ENCODE measurements at regions of chr13 and their contacts with region 1.

Region 1: GRCh38 chr13:40777166-40777808 is 6.3 kb upstream of the MRPS31 start:
- DNase-seq: peak; percentile 65
- ATAC-seq: peak; percentile 88
- H3K4me3 ChIP-seq: peak overlapping the region in 1 of 2 experiments; percentile 40; a peak in 2 of 4 replicates
- H3K27ac ChIP-seq: 0 out of 2 replicates have a peak overlapping the region, but pooled peaks have one; percentile 4
- H3K4me1 ChIP-seq: peaks cover 12 to 32% of the 10 kb centered on the region in 2 experiments
- H3K27me3 ChIP-seq: no peaks in the 10 kb centered on the region
- CTCF ChIP-seq: peak; percentile 58 to 98 (median 81)
- POLR2A ChIP-seq: no peak
- RAD21 ChIP-seq: peak; percentile 81

Region 2: DNA sequence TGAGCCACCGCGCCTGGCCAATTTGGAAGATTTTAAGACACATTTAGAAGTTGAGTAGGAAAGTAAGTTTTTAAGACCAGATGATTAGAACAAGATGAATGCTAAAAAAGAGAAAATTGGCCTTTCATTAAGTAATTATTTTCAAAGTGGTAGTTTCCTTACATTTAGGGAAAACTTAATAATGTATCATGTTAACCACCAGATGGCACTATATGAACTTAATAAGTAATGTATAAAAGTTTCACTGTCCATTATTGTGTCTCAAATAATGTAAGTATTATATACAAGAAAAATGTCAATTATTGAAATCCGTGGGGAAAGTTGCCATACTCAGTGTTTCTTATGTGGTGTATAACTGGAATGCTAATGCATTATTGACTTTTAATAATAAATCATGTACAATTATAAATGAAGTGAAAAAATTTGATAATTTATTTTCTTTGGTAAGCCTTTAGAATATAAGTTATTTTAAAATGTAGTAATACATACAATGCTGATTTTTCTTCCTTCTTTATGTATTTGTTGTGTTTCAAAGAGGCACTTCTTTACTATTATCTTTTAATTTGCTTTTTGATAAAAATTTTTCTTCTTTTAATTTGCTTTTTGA is 1092.7 kb before region 1 on chr13:
- CTCF ChIA-PET with region 1: interaction called, 6 read pairs
- POLR2A ChIA-PET with region 1: no interaction called
- RAD21 ChIA-PET with region 1: no interaction called
- intact Hi-C with region 1: loop called (anchors 5 kb)
- DNase-seq: peak; percentile 15
- ATAC-seq: peak; percentile 67
- H3K4me3 ChIP-seq: no peak overlapping the region
- H3K27ac ChIP-seq: no peak overlapping the region
- H3K4me1 ChIP-seq: no peaks in the 10 kb centered on the region
- H3K27me3 ChIP-seq: no peaks in the 10 kb centered on the region
- CTCF ChIP-seq: peak in 2 of 3 experiments; percentile 18 to 45; a peak in 2 of 6 replicates
- POLR2A ChIP-seq: no peak
- RAD21 ChIP-seq: peak; percentile 39

Region 3: DNA sequence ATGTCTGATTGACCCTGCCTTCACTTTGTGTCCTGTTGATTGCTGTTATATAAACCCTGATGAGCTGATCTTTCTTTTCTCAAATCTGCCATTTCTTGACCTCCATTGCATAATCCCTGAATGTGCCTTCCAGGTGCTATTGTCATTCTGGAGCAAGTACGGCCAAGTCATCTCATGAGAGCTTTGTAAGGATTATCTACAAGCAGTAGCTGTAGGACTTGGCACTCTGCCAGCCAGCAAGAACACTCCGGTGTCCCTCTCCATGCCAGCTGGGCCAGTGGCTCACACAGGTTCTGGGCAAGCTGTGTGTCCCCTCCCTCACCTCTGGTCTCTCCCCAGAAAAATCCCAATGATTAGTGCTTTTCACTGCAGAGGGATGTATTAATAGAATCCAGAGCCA is 458.9 kb before region 1 on chr13:
- CTCF ChIA-PET with region 1: no interaction called
- POLR2A ChIA-PET with region 1: no interaction called
- RAD21 ChIA-PET with region 1: no interaction called
- intact Hi-C with region 1: no loop called
- DNase-seq: no peak
- ATAC-seq: no peak
- H3K4me3 ChIP-seq: no peak overlapping the region
- H3K27ac ChIP-seq: no peak overlapping the region
- H3K4me1 ChIP-seq: peaks cover 0 to 3% of the 10 kb centered on the region in 2 experiments; a peak in 1 of 4 replicates
- H3K27me3 ChIP-seq: no peaks in the 10 kb centered on the region
- CTCF ChIP-seq: no peak
- POLR2A ChIP-seq: no peak
- RAD21 ChIP-seq: no peak

Region 4: GRCh38 chr13:40789275-40790133 is 12.2 kb after region 1 on chr13 and contains the start of gene SLC25A15:
- CTCF ChIA-PET with region 1: interaction called, 11 read pairs
- POLR2A ChIA-PET with region 1: interaction called, 3 read pairs
- RAD21 ChIA-PET with region 1: no interaction called
- intact Hi-C with region 1: no loop called
- DNase-seq: peak; percentile 48
- ATAC-seq: peak; percentile 93
- H3K4me3 ChIP-seq: peak within 1 kb of the TSS; percentile 75 to 81
- H3K27ac ChIP-seq: peak within 1 kb of the TSS; percentile 91
- H3K4me1 ChIP-seq: peaks cover 15 to 36% of the 10 kb centered on the region in 2 experiments; a peak in 3 of 4 replicates
- H3K27me3 ChIP-seq: no peaks in the 10 kb centered on the region
- CTCF ChIP-seq: 0 out of 6 replicates have a peak, but pooled peaks of 1 of the 3 experiments have one; percentile 4
- POLR2A ChIP-seq: peak; percentile 24
- RAD21 ChIP-seq: no peak
- total RNA-seq, gene SLC25A15: 24.5 TPM

Region 5: DNA sequence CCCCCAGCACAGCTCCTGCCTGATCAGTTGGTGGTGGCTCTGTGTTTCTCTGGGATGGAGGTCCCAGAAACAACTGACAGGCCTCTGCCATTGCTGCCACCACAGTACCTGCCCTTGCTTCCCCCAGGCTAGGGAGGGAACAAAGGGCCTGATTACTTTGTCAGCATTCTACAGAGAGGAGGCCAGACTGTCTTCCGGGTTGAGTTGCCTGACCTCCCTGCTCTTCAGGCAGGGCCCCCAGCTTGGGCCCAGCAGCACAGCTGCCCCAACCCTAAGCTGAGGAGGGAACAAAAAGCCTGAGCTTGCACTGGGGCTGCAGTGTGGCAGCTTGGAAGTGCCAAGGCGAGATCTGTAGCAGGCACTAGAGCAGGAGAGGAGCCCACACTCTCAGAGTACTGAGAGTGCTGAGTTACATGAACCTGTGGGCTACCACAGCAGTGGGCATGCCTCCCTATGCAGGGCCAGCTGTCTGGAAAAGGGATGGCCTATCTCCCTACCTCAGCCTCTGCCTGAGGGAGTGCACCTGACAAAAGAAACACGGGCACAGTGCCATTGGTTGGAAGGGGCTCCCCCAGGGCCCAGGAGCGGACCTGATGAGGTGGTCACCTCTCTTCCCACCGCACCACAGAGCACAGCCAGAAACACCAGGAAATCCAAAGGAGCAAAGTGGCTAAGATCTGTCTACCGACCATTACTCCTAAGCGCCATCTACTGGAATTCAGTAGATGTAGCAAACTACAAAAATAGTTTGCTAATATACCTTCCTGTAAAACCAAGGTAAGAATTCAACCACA is 36.6 kb after region 1 on chr13:
- CTCF ChIA-PET with region 1: interaction called, 11 read pairs
- POLR2A ChIA-PET with region 1: no interaction called
- RAD21 ChIA-PET with region 1: no interaction called
- intact Hi-C with region 1: no loop called
- DNase-seq: no peak
- ATAC-seq: peak; percentile 87
- H3K4me3 ChIP-seq: no peak overlapping the region
- H3K27ac ChIP-seq: no peak overlapping the region
- H3K4me1 ChIP-seq: 0 out of 4 replicates have a peak, but pooled peaks cover 0 to 3% of the 10 kb centered on the region in 2 experiments
- H3K27me3 ChIP-seq: no peaks in the 10 kb centered on the region
- CTCF ChIP-seq: peak; percentile 37 to 77 (median 63); a peak in 4 of 6 replicates
- POLR2A ChIP-seq: no peak
- RAD21 ChIP-seq: peak; percentile 57

Region 6: DNA sequence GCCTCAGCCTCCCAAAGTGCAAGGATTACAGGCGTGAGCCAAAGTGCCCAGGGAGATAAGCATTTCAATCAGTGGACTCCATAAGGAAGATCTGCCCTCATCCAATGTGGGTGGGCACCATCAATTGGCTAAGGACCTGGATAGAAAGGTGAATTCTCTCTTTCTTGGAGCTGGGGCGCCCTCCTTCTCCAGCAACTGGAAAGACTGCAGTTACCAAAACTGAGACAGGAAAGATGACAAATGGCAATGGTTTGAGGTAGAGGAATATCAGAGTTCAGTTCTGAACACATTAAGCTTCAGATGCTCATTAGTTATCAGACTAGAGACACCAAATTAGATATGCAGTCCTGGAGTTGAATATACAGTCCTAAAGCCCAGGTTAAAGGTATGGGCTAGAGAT is 252.3 kb after region 1 on chr13:
- CTCF ChIA-PET with region 1: interaction called, 9 read pairs
- POLR2A ChIA-PET with region 1: no interaction called
- RAD21 ChIA-PET with region 1: no interaction called
- intact Hi-C with region 1: loop called (anchors 5 kb)
- DNase-seq: no peak
- ATAC-seq: peak; percentile 69
- H3K4me3 ChIP-seq: no peak overlapping the region
- H3K27ac ChIP-seq: no peak overlapping the region
- H3K4me1 ChIP-seq: no peaks in the 10 kb centered on the region
- H3K27me3 ChIP-seq: no peaks in the 10 kb centered on the region
- CTCF ChIP-seq: peak; percentile 33 to 51 (median 43); a peak in 5 of 6 replicates
- POLR2A ChIP-seq: no peak
- RAD21 ChIP-seq: peak; percentile 63

Region 7: DNA sequence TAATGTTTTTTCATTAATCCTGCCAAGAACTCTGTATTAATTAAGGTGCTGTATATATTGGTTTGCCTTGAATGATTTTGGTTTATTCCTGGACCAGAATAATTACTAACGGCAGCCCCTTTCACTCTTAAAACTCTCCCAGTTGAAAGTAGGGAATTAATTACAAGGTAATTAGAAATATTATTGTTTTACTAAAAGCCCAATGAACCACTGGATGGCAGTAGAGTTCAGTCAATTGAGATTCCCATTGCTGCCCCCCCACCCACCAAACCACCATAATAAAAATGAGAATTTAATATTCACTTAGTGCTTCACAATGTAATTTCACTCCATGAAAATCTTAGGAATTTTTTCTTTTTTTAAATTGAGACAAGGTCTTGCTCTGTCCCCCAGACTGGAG is 297.7 kb after region 1 on chr13:
- CTCF ChIA-PET with region 1: no interaction called
- POLR2A ChIA-PET with region 1: no interaction called
- RAD21 ChIA-PET with region 1: no interaction called
- intact Hi-C with region 1: no loop called
- DNase-seq: no peak
- ATAC-seq: peak; percentile 52
- H3K4me3 ChIP-seq: no peak overlapping the region
- H3K27ac ChIP-seq: no peak overlapping the region
- H3K4me1 ChIP-seq: no peaks in the 10 kb centered on the region
- H3K27me3 ChIP-seq: no peaks in the 10 kb centered on the region
- CTCF ChIP-seq: peak; percentile 49 to 60 (median 49); a peak in 5 of 6 replicates
- POLR2A ChIP-seq: no peak
- RAD21 ChIP-seq: peak; percentile 70

Measured in HCT116 (cell line).